ENCODE measurements at regions of chr12 and their contacts with region 1.

Region 1: DNA sequence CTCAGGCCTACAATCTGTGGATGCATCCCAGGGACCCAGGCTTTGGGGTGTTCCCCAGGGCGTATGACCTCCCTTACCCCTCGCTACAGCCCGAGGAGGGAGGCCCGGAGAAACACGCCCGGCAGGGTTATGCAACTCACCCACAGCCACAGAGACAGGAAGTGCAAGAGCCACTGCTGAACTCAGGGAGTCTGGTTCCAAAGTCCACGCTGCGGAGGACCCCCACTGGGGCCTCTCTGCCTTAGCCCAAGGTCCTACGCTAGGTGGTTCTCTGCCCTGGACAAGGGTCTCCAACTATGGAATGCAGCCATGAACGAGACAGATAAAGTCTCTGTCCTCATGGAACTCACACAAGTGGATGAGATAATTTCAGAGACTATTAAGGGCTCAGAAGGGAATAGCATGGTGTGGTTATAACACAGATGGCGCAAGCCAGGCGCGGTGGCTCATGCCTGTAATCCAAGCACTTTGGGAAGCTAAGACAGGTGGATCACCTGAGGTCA is 11.3 kb downstream of the SCARB1 start:
- DNase-seq: peak; percentile 89
- ATAC-seq: peak; percentile 54
- H3K4me3 ChIP-seq: peak overlapping the region in 1 of 3 experiments; percentile 42; a peak in 2 of 6 replicates
- H3K27ac ChIP-seq: peak overlapping the region; percentile 70
- H3K4me1 ChIP-seq: peaks cover 94% of the 10 kb centered on the region
- H3K27me3 ChIP-seq: no peaks in the 10 kb centered on the region
- CTCF ChIP-seq: peak; percentile 38; the same call in 1 of the 2 replicates
- EP300 ChIP-seq: peak; percentile 40 to 88; a peak in 2 of 4 replicates
- POLR2A ChIP-seq: no peak
- RAD21 ChIP-seq: peak; percentile 51; the same call in 1 of the 2 replicates

Region 2: GRCh38 chr12:124837958-124838803 is 14.2 kb before region 1 on chr12:
- CTCF ChIA-PET with region 1: no interaction called
- POLR2A ChIA-PET with region 1: interaction called, 8 read pairs
- in situ Hi-C with region 1: no loop called
- intact Hi-C with region 1: loop called (anchors 1 kb)
- DNase-seq: peak; percentile 98
- ATAC-seq: peak; percentile 87
- H3K4me3 ChIP-seq: peak overlapping the region in 1 of 3 experiments; percentile 8; a peak in 1 of 6 replicates
- H3K27ac ChIP-seq: peak overlapping the region; percentile 75
- H3K4me1 ChIP-seq: peaks cover 98% of the 10 kb centered on the region
- H3K27me3 ChIP-seq: no peaks in the 10 kb centered on the region
- CTCF ChIP-seq: no peak; the same call in 1 of the 2 replicates
- EP300 ChIP-seq: peak in 1 of 2 experiments; percentile 60; a peak in 2 of 4 replicates
- POLR2A ChIP-seq: peak; percentile 26 to 37; a peak in 2 of 4 replicates
- RAD21 ChIP-seq: no peak